Activated T-helper 1 cell treated with anti-CD3 and anti-CD28 coated beads, Interleukin-12 subunit alpha, Interleukin-12 subunit beta, Interleukin-2, Interleukin-4 antibody, amounts not matched to agents 30 ng/mL and 10 ng/mL and 1 ng/mL, durations not matched to agents 14 hours and 24 hours and 36 hours (primary cell): ENCODE measurements at regions of chr4 and their contacts with region 1.

Region 1: DNA sequence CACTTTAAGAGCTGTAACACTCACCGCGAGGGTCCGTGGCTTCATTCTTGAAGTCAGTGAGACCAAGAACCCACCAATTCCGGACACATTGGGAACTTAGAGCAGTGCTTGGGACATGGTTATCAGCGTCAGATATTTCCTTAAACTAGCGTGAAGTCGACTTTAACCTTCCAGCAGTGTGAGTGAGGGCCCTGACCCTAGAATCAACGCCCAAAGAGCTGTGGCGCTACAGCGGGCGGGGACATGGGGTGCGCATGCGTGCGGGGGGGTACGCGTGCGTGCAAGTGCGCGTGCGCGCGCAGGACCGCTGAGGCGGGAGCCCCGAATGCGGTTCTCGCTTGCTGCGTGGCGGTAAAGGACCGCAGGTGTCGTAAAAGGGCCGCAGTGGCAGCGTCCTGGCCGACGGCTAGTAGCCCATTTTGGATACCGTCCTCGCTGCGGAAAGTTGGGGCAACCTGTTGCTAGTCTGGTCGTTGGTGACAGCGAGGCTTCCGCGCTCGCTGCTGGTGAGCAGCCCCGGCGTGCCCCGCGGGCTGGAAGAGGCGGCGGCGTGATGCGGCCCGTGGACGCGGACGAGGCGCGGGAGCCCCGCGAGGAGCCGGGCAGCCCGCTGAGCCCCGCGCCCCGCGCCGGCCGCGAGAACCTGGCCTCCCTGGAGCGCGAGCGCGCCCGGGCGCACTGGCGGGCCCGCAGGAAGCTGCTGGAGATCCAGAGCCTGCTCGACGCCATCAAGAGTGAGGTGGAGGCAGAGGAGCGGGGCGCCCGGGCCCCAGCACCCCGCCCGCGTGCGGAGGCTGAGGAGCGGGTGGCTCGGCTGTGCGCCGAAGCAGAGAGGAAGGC is 19.8 kb upstream of the S100P start:
- DNase-seq: peak; percentile 93
- H3K4me3 Mint-ChIP-seq: peak overlapping the region; percentile 98
- H3K27ac Mint-ChIP-seq: peak overlapping the region; percentile 97
- H3K4me1 Mint-ChIP-seq: peaks cover 48% of the 10 kb centered on the region
- H3K27me3 Mint-ChIP-seq: no peaks in the 10 kb centered on the region

Region 2: GRCh38 chr4:6620891-6621555 is 52.9 kb before region 1 on chr4:
- intact Hi-C with region 1: no loop called
- DNase-seq: no peak
- H3K4me3 Mint-ChIP-seq: no peak overlapping the region
- H3K27ac Mint-ChIP-seq: no peak overlapping the region
- H3K4me1 Mint-ChIP-seq: no peaks in the 10 kb centered on the region
- H3K27me3 Mint-ChIP-seq: no peaks in the 10 kb centered on the region

Region 3: GRCh38 chr4:6658597-6659075 is 15.2 kb before region 1 on chr4:
- intact Hi-C with region 1: loop called (anchors 2 kb)
- DNase-seq: peak; percentile 44
- H3K4me3 Mint-ChIP-seq: peak overlapping the region; percentile 59
- H3K27ac Mint-ChIP-seq: no peak overlapping the region
- H3K4me1 Mint-ChIP-seq: peaks cover 8% of the 10 kb centered on the region
- H3K27me3 Mint-ChIP-seq: peaks cover 31% of the 10 kb centered on the region

Region 4: GRCh38 chr4:6695660-6696630 is 22.1 kb after region 1 on chr4:
- intact Hi-C with region 1: loop called (anchors 1 kb)
- DNase-seq: peak; percentile 67
- H3K4me3 Mint-ChIP-seq: peak overlapping the region; percentile 79
- H3K27ac Mint-ChIP-seq: peak overlapping the region; percentile 100
- H3K4me1 Mint-ChIP-seq: peaks cover 69% of the 10 kb centered on the region
- H3K27me3 Mint-ChIP-seq: no peaks in the 10 kb centered on the region

Region 5: GRCh38 chr4:6709230-6710114 is 35.6 kb after region 1 on chr4 and contains the start of gene MRFAP1L1:
- intact Hi-C with region 1: loop called (anchors 1 kb)
- DNase-seq: peak; percentile 95
- H3K4me3 Mint-ChIP-seq: peak within 1 kb of the TSS; percentile 98
- H3K27ac Mint-ChIP-seq: peak within 1 kb of the TSS; percentile 95
- H3K4me1 Mint-ChIP-seq: peaks cover 62% of the 10 kb centered on the region
- H3K27me3 Mint-ChIP-seq: peaks cover 3% of the 10 kb centered on the region
- total RNA-seq, gene MRFAP1L1: 51.7 and 53.9 TPM in 2 replicates

Region 6: GRCh38 chr4:6783053-6783981 is 109.4 kb after region 1 on chr4:
- intact Hi-C with region 1: loop called (anchors 1 kb)
- DNase-seq: peak; percentile 86
- H3K4me3 Mint-ChIP-seq: peak overlapping the region; percentile 85
- H3K27ac Mint-ChIP-seq: peak overlapping the region; percentile 86
- H3K4me1 Mint-ChIP-seq: peaks cover 57% of the 10 kb centered on the region
- H3K27me3 Mint-ChIP-seq: no peaks in the 10 kb centered on the region

Region 7: GRCh38 chr4:7101692-7102515 is 428.0 kb after region 1 on chr4:
- intact Hi-C with region 1: loop called (anchors 1 kb)
- DNase-seq: peak; percentile 29
- H3K4me3 Mint-ChIP-seq: peak overlapping the region; percentile 89
- H3K27ac Mint-ChIP-seq: no peak overlapping the region
- H3K4me1 Mint-ChIP-seq: peaks cover 14% of the 10 kb centered on the region
- H3K27me3 Mint-ChIP-seq: peaks cover 15% of the 10 kb centered on the region